OCI-LY7 (cell line): ENCODE measurements at regions of chr1 and their contacts with region 1.

Region 1: GRCh38 chr1:200139661-200140250 is 112.2 kb downstream of the NR5A2 start:
- DNase-seq: peak; percentile 82
- H3K4me3 ChIP-seq: no peak overlapping the region
- H3K27ac ChIP-seq: no peak overlapping the region
- H3K4me1 ChIP-seq: peaks cover 8% of the 10 kb centered on the region
- CTCF ChIP-seq: peak; percentile 97

Region 2: DNA sequence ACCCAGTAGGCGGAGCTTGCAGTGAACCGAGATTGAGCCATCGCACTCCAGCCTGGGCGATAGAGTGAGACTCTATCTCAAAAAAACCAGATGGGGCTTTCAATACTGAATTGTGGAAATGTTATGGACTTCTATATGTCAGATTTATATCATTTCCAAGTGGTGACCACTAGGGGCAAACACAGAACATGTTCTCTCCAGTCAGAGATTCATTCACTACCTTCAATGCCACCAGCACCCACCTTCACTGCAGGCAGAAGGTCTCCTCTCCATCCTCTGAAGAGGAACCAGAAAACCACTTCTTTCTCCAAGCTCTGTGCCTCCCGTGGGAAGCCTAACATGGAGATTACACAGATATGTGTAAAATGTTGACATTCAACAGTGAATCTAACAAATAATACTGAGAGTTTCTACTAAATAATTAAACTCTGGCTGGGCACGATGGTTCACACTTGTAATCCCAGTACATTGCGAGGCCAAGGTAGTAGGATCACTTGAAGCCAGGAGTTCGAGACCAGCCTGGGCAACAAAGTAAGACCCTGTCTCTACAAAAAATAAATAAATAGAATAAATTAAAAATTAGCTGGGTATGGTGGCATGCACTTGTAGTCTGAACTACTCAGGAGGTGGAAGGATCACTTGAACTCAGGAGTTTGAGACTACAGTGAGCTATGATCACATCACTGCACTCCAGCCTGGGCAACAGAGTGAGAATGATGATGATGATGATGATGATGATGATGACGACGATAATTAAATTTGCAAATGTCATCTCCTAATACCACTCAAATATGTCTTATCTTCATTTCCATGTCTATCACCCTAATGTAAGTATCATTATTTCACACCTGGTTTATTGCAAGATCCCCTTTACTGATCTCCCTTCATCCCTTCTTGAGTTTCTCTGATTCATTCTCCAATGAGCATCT is 119.0 kb after region 1 on chr1:
- CTCF ChIA-PET with region 1: no interaction called
- POLR2A ChIA-PET with region 1: no interaction called
- intact Hi-C with region 1: loop called (anchors 5 kb)
- DNase-seq: peak; percentile 75
- H3K4me3 ChIP-seq: no peak overlapping the region
- H3K27ac ChIP-seq: no peak overlapping the region
- H3K4me1 ChIP-seq: no peaks in the 10 kb centered on the region
- CTCF ChIP-seq: peak; percentile 78

Region 3: DNA sequence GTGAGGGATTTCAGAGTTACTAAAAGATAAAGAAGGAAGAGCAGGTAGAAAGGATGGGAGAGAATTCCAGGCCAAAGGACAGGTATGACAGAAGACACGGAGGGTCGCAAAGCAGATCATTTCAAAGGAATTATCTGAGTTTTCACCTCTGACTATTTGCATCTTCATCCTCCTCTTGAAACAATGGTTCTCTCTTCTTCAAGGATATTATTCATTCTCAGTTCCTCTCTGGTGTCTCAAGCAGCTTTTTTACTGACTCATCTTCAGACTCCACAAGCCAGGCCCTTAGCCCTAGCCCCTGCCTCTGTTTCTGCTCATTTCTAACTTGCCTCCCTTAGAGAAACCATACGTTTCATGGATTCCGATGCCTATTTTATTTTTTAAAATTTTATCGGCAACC is 514.9 kb after region 1 on chr1:
- CTCF ChIA-PET with region 1: no interaction called
- POLR2A ChIA-PET with region 1: no interaction called
- intact Hi-C with region 1: no loop called
- DNase-seq: peak; percentile 54
- H3K4me3 ChIP-seq: no peak overlapping the region
- H3K27ac ChIP-seq: peak overlapping the region; percentile 36
- H3K4me1 ChIP-seq: peaks cover 14% of the 10 kb centered on the region
- CTCF ChIP-seq: no peak

Region 4: GRCh38 chr1:201299968-201300367 is 1160.2 kb after region 1 on chr1:
- CTCF ChIA-PET with region 1: no interaction called
- POLR2A ChIA-PET with region 1: no interaction called
- intact Hi-C with region 1: no loop called
- DNase-seq: no peak
- H3K4me3 ChIP-seq: no peak overlapping the region
- H3K27ac ChIP-seq: no peak overlapping the region
- H3K4me1 ChIP-seq: no peaks in the 10 kb centered on the region
- CTCF ChIP-seq: no peak